ENCODE measurements at regions of chr3 and their contacts with region 1.

Region 1: GRCh38 chr3:98741121-98741716 is 21.9 kb upstream of the ST3GAL6 start:
- DNase-seq: no peak
- H3K4me3 Mint-ChIP-seq: no peak overlapping the region
- H3K27ac Mint-ChIP-seq: no peak overlapping the region
- H3K4me1 Mint-ChIP-seq: peaks cover 38% of the 10 kb centered on the region
- H3K27me3 Mint-ChIP-seq: peaks cover 9% of the 10 kb centered on the region
- CTCF ChIP-seq: no peak

Region 2: GRCh38 chr3:98670020-98670419 is 71.2 kb before region 1 on chr3:
- CTCF ChIA-PET with region 1: no interaction called
- intact Hi-C with region 1: no loop called
- DNase-seq: peak; percentile 6
- H3K4me3 Mint-ChIP-seq: no peak overlapping the region
- H3K27ac Mint-ChIP-seq: no peak overlapping the region
- H3K4me1 Mint-ChIP-seq: no peaks in the 10 kb centered on the region
- H3K27me3 Mint-ChIP-seq: no peaks in the 10 kb centered on the region
- CTCF ChIP-seq: no peak

Region 3: DNA sequence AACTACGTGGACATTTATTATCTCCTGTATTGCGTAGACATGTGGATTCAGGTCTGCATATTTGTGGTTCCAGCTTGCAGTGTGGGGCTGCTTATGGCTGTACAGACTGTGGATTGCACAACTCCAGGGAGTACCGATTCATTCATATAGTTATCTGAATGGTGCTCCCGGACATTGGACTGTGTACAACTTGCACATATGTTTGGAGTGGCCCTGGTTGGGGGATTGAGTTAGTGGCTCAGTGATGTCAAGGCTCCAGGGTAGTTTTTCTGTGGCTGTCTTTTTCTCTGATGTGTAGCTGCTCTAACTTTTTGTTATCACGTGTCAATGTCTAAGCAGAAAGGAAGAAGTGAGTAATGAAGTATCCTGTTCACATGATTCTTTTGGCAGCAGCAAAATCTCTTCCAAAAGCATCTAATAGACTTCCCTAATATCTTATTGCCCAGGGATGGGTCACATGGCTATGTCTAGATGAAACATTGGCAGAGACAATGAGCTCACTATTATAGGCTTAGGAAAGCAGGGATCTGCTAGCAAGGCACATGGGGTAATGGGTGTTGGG is 37.7 kb after region 1 on chr3:
- CTCF ChIA-PET with region 1: interaction called, 4 read pairs
- intact Hi-C with region 1: loop called (anchors 5 kb)
- DNase-seq: peak; percentile 17
- H3K4me3 Mint-ChIP-seq: no peak overlapping the region
- H3K27ac Mint-ChIP-seq: peak overlapping the region; percentile 60
- H3K4me1 Mint-ChIP-seq: peaks cover 36% of the 10 kb centered on the region
- H3K27me3 Mint-ChIP-seq: no peaks in the 10 kb centered on the region
- CTCF ChIP-seq: no peak

Region 4: GRCh38 chr3:98812851-98813374 is 71.7 kb after region 1 on chr3:
- CTCF ChIA-PET with region 1: no interaction called
- intact Hi-C with region 1: no loop called
- DNase-seq: peak; percentile 11
- H3K4me3 Mint-ChIP-seq: no peak overlapping the region
- H3K27ac Mint-ChIP-seq: no peak overlapping the region
- H3K4me1 Mint-ChIP-seq: peaks cover 23% of the 10 kb centered on the region
- H3K27me3 Mint-ChIP-seq: no peaks in the 10 kb centered on the region
- CTCF ChIP-seq: no peak